Sigmoid colon (tissue), 7 donors: ENCODE measurements at regions of chr5 and their contacts with region 1.

Region 1: DNA sequence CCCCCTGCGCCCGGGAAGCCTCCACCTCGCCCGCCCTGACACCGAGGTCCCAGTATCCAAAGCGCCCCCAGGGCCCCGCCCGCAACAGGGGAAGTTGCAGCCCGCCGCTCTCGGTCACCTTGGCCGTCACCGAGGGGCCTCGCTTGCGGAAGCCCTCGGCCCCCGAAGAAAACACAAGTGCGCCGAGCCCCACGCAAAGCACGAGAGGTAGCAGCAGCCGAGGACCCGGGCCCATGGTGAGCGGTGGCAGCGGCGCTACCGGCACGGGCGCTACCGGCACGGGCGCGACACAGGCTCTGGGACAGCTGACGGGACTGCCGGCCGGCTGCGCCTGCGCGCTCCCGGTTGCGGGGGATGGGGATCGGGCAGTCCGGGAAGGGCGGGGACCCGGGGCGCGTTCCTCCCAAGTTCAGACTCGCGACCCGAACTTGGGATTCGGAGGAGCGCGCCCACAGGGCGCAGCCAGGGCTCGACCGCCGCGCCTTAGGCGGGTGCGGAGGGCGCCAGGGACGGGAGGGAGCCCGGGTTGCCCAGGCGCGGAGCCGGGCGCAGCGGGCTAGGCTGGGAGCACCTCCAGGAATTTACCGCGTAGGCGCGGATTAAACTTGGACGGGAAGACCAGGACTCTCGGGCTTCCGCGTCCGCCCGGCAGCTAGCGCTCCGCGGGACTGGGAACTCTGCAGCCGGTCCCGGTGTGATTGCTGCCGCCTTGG is at the start of gene PPIC:
- DNase-seq: peak; percentile 95
- H3K4me3 ChIP-seq: peak within 1 kb of the TSS; percentile 64 to 88 (median 86)
- H3K27ac ChIP-seq: peak within 1 kb of the TSS; percentile 93 to 96 (median 94)
- H3K4me1 ChIP-seq: peaks cover 0 to 32% (median 25%) of the 10 kb centered on the region in 4 donors
- H3K27me3 ChIP-seq: no peaks in the 10 kb centered on the region
- CTCF ChIP-seq: no peak
- EP300 ChIP-seq: no peak
- POLR2A ChIP-seq: peak; percentile 48 to 74
- total RNA-seq, gene PPIC: 26.5 to 79.2 (median 58.4) TPM

Region 2: GRCh38 chr5:121968910-121969607 is 1067.5 kb before region 1 on chr5:
- intact Hi-C with region 1: loop called (anchors 10 kb)
- DNase-seq: no peak
- H3K4me3 ChIP-seq: no peak overlapping the region
- H3K27ac ChIP-seq: peak overlapping the region; percentile 44 to 70 (median 56)
- H3K4me1 ChIP-seq: peaks cover 0 to 36% (median 25%) of the 10 kb centered on the region in 4 donors
- H3K27me3 ChIP-seq: no peaks in the 10 kb centered on the region
- CTCF ChIP-seq: no peak
- EP300 ChIP-seq: peak in 1 of 4 donors; percentile 10
- POLR2A ChIP-seq: no peak

Region 3: DNA sequence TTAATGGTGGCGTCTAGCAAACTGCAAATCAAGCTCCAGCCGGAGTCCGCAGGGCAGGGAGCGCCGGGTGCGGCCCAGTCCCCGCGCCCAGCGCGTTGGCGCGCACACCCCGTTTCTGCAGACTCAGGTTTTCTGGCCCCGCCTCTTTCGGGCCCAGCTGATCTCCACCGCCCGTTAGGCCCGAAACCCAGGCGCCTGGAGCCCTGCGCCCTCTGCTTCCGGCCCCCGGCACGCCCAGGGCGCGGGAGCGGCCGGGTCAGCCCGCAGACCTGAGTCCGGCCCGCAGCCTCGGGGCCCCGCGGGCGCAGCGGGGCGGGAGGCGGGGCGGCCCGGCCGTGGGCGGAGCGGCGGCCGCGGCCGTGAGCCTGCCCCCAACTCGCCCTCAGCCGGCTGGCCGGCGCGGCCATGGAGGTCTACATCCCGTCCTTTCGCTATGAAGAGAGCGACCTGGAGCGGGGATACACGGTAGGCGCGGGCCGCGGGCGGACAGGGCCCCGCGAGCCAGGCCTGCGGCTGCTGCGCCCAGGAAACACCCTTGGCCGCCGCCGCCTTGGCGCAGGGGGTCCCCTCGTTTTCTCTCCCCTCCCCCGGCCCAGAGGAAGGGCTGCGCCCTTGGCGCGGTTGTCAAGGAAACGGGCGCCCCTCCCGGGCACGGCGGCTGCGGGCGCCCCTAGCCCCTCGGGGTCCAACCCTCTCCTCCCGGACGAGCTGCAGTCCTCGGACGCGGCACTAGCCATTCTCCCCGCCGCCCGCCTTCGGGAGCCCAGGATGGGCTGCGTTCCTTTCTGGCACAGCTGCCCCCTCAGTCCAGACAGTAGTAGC is 191.1 kb before region 1 on chr5 and contains the start of gene SNX24:
- intact Hi-C with region 1: loop called (anchors 2 kb)
- DNase-seq: peak; percentile 86
- H3K4me3 ChIP-seq: peak within 1 kb of the TSS; percentile 87 to 99 (median 97)
- H3K27ac ChIP-seq: peak within 1 kb of the TSS; percentile 91 to 97 (median 96)
- H3K4me1 ChIP-seq: peaks cover 0 to 31% (median 20%) of the 10 kb centered on the region in 4 donors
- H3K27me3 ChIP-seq: no peaks in the 10 kb centered on the region
- CTCF ChIP-seq: no peak
- EP300 ChIP-seq: no peak
- POLR2A ChIP-seq: no peak
- total RNA-seq, gene SNX24: 8.2 to 21.0 (median 10.6) TPM

Region 4: DNA sequence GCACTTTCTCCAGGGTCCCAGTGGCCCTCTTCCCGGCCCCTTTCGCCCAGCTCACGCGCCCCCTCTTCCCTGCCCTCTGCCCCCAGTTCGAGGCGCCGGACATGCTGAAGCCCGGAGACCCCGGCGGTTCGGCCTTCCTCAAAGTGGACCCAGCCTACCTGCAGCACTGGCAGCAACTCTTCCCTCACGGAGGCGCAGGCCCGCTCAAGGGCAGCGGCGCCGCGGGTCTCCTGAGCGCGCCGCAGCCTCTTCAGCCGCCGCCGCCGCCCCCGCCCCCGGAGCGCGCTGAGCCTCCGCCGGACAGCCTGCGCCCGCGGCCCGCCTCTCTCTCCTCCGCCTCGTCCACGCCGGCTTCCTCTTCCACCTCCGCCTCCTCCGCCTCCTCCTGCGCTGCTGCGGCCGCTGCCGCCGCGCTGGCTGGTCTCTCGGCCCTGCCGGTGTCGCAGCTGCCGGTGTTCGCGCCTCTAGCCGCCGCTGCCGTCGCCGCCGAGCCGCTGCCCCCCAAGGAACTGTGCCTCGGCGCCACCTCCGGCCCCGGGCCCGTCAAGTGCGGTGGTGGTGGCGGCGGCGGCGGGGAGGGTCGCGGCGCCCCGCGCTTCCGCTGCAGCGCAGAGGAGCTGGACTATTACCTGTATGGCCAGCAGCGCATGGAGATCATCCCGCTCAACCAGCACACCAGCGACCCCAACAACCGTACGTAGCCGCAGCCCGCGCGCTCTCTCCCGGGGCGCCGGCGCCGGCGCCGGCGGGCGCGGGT is 53.5 kb after region 1 on chr5:
- intact Hi-C with region 1: loop called (anchors 1 kb)
- DNase-seq: peak; percentile 65
- H3K4me3 ChIP-seq: peak overlapping the region; percentile 70 to 85 (median 78)
- H3K27ac ChIP-seq: peak overlapping the region in 3 of 4 donors; percentile 83 to 88 (median 83)
- H3K4me1 ChIP-seq: peaks cover 0 to 26% (median 15%) of the 10 kb centered on the region in 4 donors
- H3K27me3 ChIP-seq: peaks cover 0 to 58% (median 0%) of the 10 kb centered on the region in 3 donors
- CTCF ChIP-seq: no peak
- EP300 ChIP-seq: no peak
- POLR2A ChIP-seq: no peak

Region 5: DNA sequence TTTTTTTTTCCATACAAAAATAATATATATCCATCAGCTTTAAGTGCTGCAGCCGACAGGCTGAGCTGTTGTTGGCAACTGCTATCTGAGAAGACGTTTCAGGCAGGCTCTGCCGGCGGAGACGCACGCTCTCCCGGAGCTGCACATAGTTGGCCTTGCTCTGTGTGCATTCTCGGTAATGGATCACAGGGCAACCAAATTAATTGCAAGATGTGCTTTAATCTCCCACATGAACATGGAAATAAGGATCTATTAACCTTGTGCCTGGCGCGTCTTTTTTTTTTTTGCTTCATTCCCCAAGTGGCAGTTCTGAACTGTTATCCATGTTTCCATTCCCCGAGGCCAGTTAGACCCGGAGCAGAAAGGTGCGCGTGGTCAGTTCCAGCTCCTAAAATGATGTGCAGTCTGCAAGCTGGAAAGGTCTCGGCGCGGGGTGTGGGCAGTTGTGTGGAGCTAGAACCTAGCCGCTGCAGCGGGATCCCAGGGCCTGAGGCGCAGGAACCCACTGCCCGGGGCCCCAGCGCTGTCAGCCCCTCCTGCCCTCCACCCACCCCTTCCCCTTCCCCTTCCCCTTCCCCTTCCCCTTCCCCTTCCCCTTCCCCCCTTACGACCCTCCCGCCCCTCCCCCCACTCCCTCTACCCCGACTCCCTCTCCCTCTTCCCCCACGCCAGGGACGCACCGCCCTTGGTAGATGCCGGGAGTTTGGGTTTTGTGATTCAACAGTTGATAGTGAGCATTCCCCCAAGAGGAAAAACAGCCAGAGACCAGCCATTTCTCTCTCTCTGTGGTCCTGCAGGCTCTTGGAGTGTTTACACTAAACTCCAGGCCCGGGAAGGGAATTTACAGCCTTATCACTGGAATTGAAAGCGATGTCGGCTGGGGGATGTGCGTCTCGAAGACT is 248.8 kb after region 1 on chr5:
- intact Hi-C with region 1: loop called (anchors 5 kb)
- DNase-seq: peak; percentile 70
- H3K4me3 ChIP-seq: peak overlapping the region; percentile 22 to 44 (median 36)
- H3K27ac ChIP-seq: peak overlapping the region in 3 of 4 donors; percentile 76 to 82 (median 77)
- H3K4me1 ChIP-seq: peaks cover 0 to 28% (median 21%) of the 10 kb centered on the region in 4 donors
- H3K27me3 ChIP-seq: no peaks in the 10 kb centered on the region
- CTCF ChIP-seq: no peak
- EP300 ChIP-seq: no peak
- POLR2A ChIP-seq: no peak

Region 6: DNA sequence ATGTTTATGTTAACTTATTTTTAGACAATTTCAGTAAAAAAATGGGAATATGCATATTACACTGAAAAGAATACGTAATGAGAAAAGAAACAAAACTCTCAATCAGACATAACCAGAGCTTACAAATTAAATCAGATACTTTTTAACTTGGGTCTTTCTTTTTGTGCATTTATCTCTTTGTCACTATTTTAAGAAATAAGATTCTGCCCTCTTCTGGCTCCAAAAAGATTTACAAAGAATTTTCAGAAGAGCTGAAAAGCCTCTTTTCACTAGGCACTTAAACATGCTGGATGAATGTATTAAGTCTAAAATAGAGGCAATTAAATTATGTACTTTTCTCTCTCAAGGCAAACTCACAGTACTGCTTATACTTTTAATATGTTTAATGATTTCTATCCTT is 331.2 kb after region 1 on chr5:
- intact Hi-C with region 1: loop called (anchors 5 kb)
- DNase-seq: no peak
- H3K4me3 ChIP-seq: no peak overlapping the region
- H3K27ac ChIP-seq: no peak overlapping the region
- H3K4me1 ChIP-seq: peaks cover 0 to 28% (median 17%) of the 10 kb centered on the region in 4 donors
- H3K27me3 ChIP-seq: no peaks in the 10 kb centered on the region
- CTCF ChIP-seq: peak in 2 of 4 experiments; percentile 11 to 35
- EP300 ChIP-seq: no peak
- POLR2A ChIP-seq: no peak